ENCODE measurements at regions of chr4 and their contacts with region 1.

Region 1: DNA sequence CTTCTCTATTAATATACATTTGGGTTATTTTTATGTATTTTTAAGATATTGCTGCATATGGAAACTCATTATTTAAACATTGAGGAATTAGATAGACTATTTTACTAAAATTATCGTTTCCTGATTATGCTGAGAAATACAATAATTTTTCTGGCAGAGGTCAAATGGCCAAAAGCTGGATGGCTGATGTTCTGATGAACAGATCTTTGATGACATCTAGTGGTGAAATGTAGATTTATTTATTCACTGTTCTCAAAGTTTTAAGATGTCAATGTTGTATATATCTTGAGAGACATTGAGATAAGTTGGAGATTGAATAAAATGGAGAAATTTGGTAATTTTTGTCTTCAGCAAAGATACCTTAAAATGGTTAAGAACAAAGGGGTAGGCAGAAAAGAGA is 96.2 kb downstream of the UGT8 start:
- DNase-seq: peak; percentile 28
- ATAC-seq: peak; percentile 64
- H3K4me3 ChIP-seq: no peak overlapping the region
- H3K27ac ChIP-seq: no peak overlapping the region
- H3K4me1 ChIP-seq: no peaks in the 10 kb centered on the region
- H3K27me3 ChIP-seq: no peaks in the 10 kb centered on the region
- CTCF ChIP-seq: peak; percentile 33 to 62 (median 57); a peak in 4 of 6 replicates
- POLR2A ChIP-seq: no peak
- RAD21 ChIP-seq: peak; percentile 79

Region 2: DNA sequence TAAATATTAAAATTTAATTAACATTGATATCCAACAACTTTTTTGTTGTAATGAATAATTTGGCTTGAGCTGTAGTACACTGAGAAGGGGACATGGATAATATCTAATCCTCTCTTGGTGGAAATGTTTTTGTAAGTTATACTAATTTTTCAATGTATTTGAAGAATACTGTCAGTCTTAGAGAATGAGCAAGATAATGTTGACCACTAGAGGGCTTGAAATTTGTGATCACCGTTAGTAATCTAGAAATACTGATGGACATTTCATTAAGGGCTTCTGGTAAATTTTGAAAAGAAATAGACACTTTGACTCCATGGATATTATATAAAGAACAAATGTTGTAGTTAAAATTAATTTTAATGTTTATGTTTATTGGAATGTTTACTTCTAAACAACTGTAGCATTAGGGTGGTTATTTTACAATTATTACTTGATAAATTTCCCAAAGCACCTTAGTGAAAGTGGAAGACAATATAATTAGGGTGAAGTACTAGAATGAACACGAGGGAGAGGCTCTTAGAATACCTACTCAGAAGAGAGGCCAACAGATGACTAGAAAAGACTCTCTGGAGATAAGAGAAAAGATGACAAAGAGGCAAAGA is 913.2 kb before region 1 on chr4:
- CTCF ChIA-PET with region 1: no interaction called
- POLR2A ChIA-PET with region 1: no interaction called
- RAD21 ChIA-PET with region 1: no interaction called
- intact Hi-C with region 1: loop called (anchors 10 kb)
- DNase-seq: no peak
- ATAC-seq: peak; percentile 71
- H3K4me3 ChIP-seq: no peak overlapping the region
- H3K27ac ChIP-seq: no peak overlapping the region
- H3K4me1 ChIP-seq: no peaks in the 10 kb centered on the region
- H3K27me3 ChIP-seq: no peaks in the 10 kb centered on the region
- CTCF ChIP-seq: peak; percentile 39 to 75 (median 56); a peak in 5 of 6 replicates
- POLR2A ChIP-seq: no peak
- RAD21 ChIP-seq: peak; percentile 51

Region 3: DNA sequence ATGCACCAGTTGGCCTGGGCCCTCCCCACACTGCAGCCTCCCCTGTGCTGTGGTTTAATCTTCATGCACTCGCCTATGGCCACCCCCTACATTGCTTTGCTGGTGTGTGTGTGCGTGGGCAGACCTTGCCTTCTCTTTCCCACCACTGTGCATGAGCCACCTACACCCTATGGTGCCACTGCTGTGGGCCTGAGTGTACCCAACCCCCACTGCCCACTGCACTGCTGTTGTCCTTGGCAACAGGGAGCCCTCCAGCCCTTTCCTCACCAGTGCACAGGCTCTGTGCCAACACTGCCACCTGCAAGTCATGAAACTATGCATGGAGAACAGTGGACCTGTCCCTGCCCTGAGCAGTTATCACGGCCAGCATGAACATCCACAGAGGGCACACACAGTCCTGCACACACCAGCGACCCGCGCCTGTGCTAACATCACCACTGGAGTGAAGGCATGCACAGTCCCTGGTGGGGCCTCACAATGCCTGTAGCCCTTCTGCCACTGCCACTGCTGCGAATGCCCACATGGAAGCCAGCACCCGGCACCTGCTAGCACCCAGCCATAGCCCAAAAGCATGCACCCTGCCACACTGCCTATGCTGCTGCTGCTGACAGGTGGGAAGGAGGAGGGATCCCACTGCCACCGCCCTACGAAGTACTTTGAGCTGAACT is 477.5 kb before region 1 on chr4:
- CTCF ChIA-PET with region 1: no interaction called
- POLR2A ChIA-PET with region 1: no interaction called
- RAD21 ChIA-PET with region 1: no interaction called
- intact Hi-C with region 1: no loop called
- DNase-seq: no peak
- ATAC-seq: no peak
- H3K4me3 ChIP-seq: no peak overlapping the region
- H3K27ac ChIP-seq: no peak overlapping the region
- H3K4me1 ChIP-seq: no peaks in the 10 kb centered on the region
- H3K27me3 ChIP-seq: no peaks in the 10 kb centered on the region
- CTCF ChIP-seq: no peak
- POLR2A ChIP-seq: no peak
- RAD21 ChIP-seq: no peak

Region 4: DNA sequence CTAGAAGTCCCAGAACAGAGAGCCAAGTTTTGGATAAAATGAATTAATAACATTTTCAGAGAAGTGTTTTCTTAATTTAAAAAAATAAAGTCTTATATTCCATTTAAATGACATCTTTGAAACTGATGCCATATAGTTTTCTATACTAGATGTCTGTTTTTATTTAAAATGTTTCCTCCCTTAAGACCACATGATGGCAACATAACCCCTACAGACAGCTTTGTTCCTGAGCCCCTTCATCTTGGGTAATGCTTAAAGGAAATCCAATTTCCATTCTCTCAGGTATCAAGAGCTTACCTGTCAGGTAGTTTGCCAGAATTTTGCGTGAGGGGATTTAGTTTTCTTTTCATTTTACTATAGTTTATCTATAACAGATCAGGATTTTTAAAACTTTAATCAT is 277.6 kb before region 1 on chr4:
- CTCF ChIA-PET with region 1: interaction called, 10 read pairs
- POLR2A ChIA-PET with region 1: no interaction called
- RAD21 ChIA-PET with region 1: no interaction called
- intact Hi-C with region 1: no loop called
- DNase-seq: peak; percentile 10
- ATAC-seq: no peak; the same call in 1 of the 2 replicates
- H3K4me3 ChIP-seq: no peak overlapping the region
- H3K27ac ChIP-seq: no peak overlapping the region
- H3K4me1 ChIP-seq: no peaks in the 10 kb centered on the region
- H3K27me3 ChIP-seq: no peaks in the 10 kb centered on the region
- CTCF ChIP-seq: peak in 2 of 3 experiments; percentile 23 to 41; a peak in 2 of 6 replicates
- POLR2A ChIP-seq: no peak
- RAD21 ChIP-seq: peak; percentile 63